BJ (cell line): ENCODE measurements at regions of chr15 and their contacts with region 1.

Region 1: GRCh38 chr15:76330080-76330680 is 6.4 kb upstream of the ISL2 start:
- DNase-seq: no peak
- H3K4me3 ChIP-seq: no peak overlapping the region
- H3K27me3 ChIP-seq: no peaks in the 10 kb centered on the region
- CTCF ChIP-seq: peak; percentile 80

Region 2: GRCh38 chr15:76185716-76186115 is 144.5 kb before region 1 on chr15:
- CTCF ChIA-PET with region 1: interaction called, 31 read pairs
- POLR2A ChIA-PET with region 1: no interaction called
- DNase-seq: peak; percentile 49
- H3K4me3 ChIP-seq: no peak overlapping the region
- H3K27me3 ChIP-seq: no peaks in the 10 kb centered on the region
- CTCF ChIP-seq: peak; percentile 67

Region 3: GRCh38 chr15:76190834-76191538 is 139.2 kb before region 1 on chr15:
- CTCF ChIA-PET with region 1: interaction called, 31 read pairs
- POLR2A ChIA-PET with region 1: no interaction called
- DNase-seq: no peak
- H3K4me3 ChIP-seq: no peak overlapping the region
- H3K27me3 ChIP-seq: no peaks in the 10 kb centered on the region
- CTCF ChIP-seq: peak; percentile 95

Region 4: GRCh38 chr15:76235186-76235826 is 94.9 kb before region 1 on chr15:
- CTCF ChIA-PET with region 1: interaction called, 15 read pairs
- POLR2A ChIA-PET with region 1: no interaction called
- DNase-seq: peak; percentile 15
- H3K4me3 ChIP-seq: no peak overlapping the region
- H3K27me3 ChIP-seq: no peaks in the 10 kb centered on the region
- CTCF ChIP-seq: peak; percentile 52

Region 5: DNA sequence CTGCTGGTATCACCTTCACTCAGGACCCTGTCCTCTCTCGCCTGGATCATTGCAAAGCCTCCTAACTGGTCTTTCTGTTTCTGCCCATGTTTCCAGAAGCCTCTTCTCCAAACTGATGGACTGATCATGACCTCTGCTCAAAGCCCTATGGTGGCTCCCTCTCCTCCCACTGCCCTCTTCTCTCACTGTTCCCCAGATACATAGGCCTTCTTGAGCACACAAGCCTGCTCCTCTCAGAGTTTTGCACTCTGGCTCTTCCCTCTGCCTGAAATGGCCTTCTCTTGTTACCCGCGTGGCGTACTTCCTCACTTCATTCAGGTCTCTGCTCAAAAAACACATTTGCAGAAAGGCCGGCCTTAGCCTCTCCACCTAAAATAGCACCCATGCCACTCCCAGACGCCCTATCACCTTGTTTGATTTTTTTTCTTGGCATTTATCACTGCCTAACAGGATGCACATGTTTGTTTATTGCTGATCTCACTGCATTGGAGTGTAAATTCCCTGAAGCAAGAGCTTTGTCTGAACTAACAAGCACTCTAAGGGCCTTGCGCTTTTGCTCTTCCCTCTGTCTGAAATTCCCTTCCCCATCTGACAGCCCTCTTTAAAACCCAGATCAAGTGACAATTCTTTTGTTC is 17.5 kb before region 1 on chr15:
- CTCF ChIA-PET with region 1: interaction called, 32 read pairs
- POLR2A ChIA-PET with region 1: no interaction called
- DNase-seq: no peak
- H3K4me3 ChIP-seq: no peak overlapping the region
- H3K27me3 ChIP-seq: no peaks in the 10 kb centered on the region
- CTCF ChIP-seq: no peak

Region 6: DNA sequence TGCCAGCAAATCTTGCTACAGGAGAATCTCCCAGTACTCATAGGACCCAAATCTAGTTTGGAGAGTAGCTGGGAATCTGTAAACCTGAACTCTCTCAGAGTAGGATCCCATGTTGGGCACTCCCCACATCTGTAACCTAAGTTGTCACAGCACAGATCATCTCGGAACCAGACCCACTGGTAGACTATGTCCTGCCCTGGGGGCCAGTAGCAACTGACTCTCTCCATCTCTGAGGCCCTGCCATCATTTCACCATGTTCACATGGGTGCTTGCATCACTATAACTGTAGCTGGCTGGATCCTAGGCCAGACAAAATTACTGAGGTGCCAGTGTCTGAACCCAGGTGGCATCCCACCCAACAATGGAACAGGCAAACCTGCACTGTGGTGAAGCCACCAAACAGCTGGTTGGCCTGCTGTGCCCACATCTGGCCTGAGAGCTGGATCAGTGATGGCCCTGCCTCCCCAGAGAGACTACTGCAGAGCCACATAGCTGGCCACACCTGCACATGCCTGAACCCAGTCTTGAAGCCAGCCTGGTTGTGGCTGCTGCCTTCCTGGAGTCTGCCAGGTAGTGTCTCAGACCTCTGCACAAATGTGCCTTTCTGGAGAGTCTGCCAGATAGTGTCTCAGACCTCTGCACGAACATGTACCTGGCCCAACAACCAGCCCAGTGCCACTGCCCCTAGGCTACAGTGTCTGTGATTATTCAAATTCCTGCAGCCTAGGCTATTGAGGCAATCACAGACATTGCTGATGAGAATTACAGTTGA is 88.4 kb after region 1 on chr15:
- CTCF ChIA-PET with region 1: no interaction called
- POLR2A ChIA-PET with region 1: no interaction called
- DNase-seq: no peak
- H3K4me3 ChIP-seq: no peak overlapping the region
- H3K27me3 ChIP-seq: no peaks in the 10 kb centered on the region; the same call in 1 of the 2 replicates
- CTCF ChIP-seq: no peak

Region 7: GRCh38 chr15:76866716-76867321 is 536.6 kb after region 1 on chr15:
- CTCF ChIA-PET with region 1: no interaction called
- POLR2A ChIA-PET with region 1: no interaction called
- DNase-seq: peak; percentile 30
- H3K4me3 ChIP-seq: no peak overlapping the region
- H3K27me3 ChIP-seq: no peaks in the 10 kb centered on the region
- CTCF ChIP-seq: peak; percentile 62